IMR-90 (cell line): ENCODE measurements at regions of chr5 and their contacts with region 1.

Region 1: GRCh38 chr5:36870399-36871040 is 6.0 kb upstream of the NIPBL start:
- DNase-seq: peak; percentile 70
- ATAC-seq: peak; percentile 73
- H3K4me3 ChIP-seq: no peak overlapping the region
- H3K27ac ChIP-seq: no peak overlapping the region
- H3K4me1 ChIP-seq: no peaks in the 10 kb centered on the region
- H3K27me3 ChIP-seq: no peaks in the 10 kb centered on the region
- CTCF ChIP-seq: peak; percentile 65
- POLR2A ChIP-seq: no peak
- RAD21 ChIP-seq: peak; percentile 45

Region 2: DNA sequence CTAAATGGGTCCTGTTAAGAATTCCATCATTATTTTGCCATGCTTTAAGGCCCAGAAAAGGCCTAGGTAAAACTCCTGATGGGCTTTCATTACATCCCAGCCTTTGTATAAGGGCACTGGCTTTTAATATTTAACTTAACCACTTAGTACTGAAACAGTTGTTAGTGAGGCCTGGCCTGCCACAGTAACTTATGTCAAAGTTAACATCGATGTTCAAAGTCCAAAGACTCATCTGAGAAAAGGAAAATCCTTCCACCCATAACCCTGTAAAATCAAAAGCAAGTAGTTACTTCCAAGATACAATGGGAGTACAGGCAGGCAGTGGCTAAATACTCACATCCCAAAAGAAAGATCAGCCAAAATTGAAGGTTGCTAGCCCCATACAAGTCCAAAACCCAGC is 864.4 kb before region 1 on chr5:
- CTCF ChIA-PET with region 1: no interaction called
- POLR2A ChIA-PET with region 1: no interaction called
- dilution Hi-C with region 1: no loop called
- in situ Hi-C with region 1: no loop called
- intact Hi-C with region 1: no loop called
- DNase-seq: no peak
- ATAC-seq: no peak
- H3K4me3 ChIP-seq: no peak overlapping the region
- H3K27ac ChIP-seq: no peak overlapping the region
- H3K4me1 ChIP-seq: no peaks in the 10 kb centered on the region
- H3K27me3 ChIP-seq: no peaks in the 10 kb centered on the region
- CTCF ChIP-seq: no peak
- POLR2A ChIP-seq: no peak
- RAD21 ChIP-seq: no peak

Region 3: DNA sequence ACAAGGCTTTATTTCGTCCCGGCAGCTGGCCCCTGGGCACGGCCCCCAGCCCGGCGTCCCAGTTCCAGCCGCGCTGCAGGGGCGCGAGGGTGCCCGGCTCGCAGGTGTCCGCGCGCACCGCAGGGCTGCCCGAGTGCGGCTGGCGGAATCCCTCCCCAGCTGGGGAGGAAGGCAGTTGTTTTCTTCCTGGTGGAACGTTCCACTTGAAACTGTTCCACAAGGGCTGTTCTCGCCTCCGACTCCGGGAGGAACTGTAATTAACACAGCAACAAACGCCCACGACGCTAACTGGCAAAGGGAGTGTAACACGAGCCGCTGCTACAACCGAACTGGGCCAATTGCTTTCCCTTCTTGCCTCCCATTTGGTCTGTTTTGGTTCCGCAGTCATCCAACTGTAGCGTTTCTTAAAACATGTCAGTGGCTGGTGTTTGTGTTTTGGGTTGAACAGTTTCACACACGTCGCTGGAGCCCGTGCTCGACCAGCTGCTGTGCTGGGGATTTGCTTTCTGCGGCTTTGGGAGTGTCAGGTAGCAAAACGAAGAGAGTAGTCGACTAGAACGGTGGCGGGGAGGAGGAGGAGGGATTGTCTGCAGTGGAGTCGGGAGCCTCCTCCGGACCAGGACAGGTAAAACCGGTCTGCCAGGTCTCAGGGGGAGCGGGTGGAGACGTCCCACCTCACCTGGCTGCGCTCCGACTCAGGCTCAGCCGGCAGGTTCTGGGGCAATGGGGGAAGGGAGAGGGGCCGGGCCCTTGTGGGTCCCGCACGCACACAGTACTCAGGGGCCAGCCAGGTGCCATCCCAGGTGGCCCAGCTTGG is 125.5 kb before region 1 on chr5:
- CTCF ChIA-PET with region 1: interaction called, 4 read pairs
- POLR2A ChIA-PET with region 1: no interaction called
- dilution Hi-C with region 1: no loop called
- in situ Hi-C with region 1: no loop called
- intact Hi-C with region 1: loop called (anchors 2 kb)
- DNase-seq: peak; percentile 25
- ATAC-seq: peak; percentile 58
- H3K4me3 ChIP-seq: peak overlapping the region; percentile 43
- H3K27ac ChIP-seq: no peak overlapping the region
- H3K4me1 ChIP-seq: peaks cover 4% of the 10 kb centered on the region
- H3K27me3 ChIP-seq: peaks cover 25% of the 10 kb centered on the region
- CTCF ChIP-seq: no peak
- POLR2A ChIP-seq: no peak
- RAD21 ChIP-seq: no peak; the same call in 1 of the 2 replicates